H1 (cell line): ENCODE measurements at regions of chr12 and their contacts with region 1.

Region 1: GRCh38 chr12:93476555-93476954 is 9.2 kb downstream of the MRPL42 start:
- DNase-seq: no peak
- H3K4me3 ChIP-seq: no peak overlapping the region
- H3K27ac ChIP-seq: no peak overlapping the region
- H3K4me1 ChIP-seq: no peaks in the 10 kb centered on the region
- H3K27me3 ChIP-seq: no peaks in the 10 kb centered on the region
- CTCF ChIP-seq: no peak
- EP300 ChIP-seq: no peak
- POLR2A ChIP-seq: no peak
- RAD21 ChIP-seq: no peak

Region 2: GRCh38 chr12:93317227-93317626 is 159.3 kb before region 1 on chr12:
- CTCF ChIA-PET with region 1: no interaction called
- POLR2A ChIA-PET with region 1: no interaction called
- DNase-seq: no peak
- H3K4me3 ChIP-seq: no peak overlapping the region
- H3K27ac ChIP-seq: no peak overlapping the region
- H3K4me1 ChIP-seq: no peaks in the 10 kb centered on the region
- H3K27me3 ChIP-seq: no peaks in the 10 kb centered on the region
- CTCF ChIP-seq: no peak
- EP300 ChIP-seq: no peak
- POLR2A ChIP-seq: no peak
- RAD21 ChIP-seq: no peak

Region 3: DNA sequence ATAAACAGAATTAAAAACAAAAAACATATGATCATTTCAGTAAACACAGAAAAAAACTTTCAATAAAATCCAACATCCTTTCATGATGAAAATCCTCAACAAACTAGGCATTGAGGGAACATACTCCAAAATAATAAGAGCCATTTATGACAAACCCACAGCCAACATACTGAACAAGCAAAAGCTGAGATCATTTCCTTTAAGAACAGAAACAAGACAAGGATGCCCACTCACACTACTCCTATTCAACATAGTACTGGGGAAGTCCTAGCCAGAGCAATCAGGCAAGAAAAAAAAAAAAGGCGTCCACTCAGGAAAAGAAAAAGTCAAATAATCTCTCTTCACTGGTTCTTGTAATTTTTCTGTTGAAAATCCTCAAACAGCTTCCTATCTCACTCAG is 20.9 kb after region 1 on chr12:
- CTCF ChIA-PET with region 1: interaction called, 10 read pairs
- POLR2A ChIA-PET with region 1: interaction called, 17 read pairs
- DNase-seq: no peak
- H3K4me3 ChIP-seq: no peak overlapping the region
- H3K27ac ChIP-seq: no peak overlapping the region
- H3K4me1 ChIP-seq: no peaks in the 10 kb centered on the region
- H3K27me3 ChIP-seq: no peaks in the 10 kb centered on the region
- CTCF ChIP-seq: no peak
- EP300 ChIP-seq: no peak
- POLR2A ChIP-seq: no peak
- RAD21 ChIP-seq: no peak

Region 4: DNA sequence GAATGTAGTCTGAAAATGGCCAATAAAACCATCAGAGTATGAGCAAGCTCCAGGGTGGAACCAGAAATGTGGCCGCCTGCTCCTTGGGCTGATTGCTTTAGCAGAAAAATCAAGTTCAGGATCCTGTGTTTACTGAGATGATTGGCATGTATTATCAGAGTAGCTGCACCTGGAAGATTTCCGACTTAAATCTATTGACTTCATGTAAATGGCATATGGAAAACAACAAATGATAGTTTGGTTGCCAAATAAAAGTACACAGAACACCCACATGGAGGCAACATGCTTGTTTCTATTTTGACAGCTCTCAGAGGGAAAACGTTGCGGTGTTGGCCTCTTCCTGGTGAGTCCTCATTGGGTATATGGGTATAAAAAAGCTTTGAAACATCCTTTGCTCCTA is 127.2 kb after region 1 on chr12:
- CTCF ChIA-PET with region 1: no interaction called
- POLR2A ChIA-PET with region 1: no interaction called
- DNase-seq: no peak
- H3K4me3 ChIP-seq: no peak overlapping the region
- H3K27ac ChIP-seq: no peak overlapping the region
- H3K4me1 ChIP-seq: no peaks in the 10 kb centered on the region
- H3K27me3 ChIP-seq: no peaks in the 10 kb centered on the region
- CTCF ChIP-seq: no peak
- EP300 ChIP-seq: no peak
- POLR2A ChIP-seq: no peak
- RAD21 ChIP-seq: 0 out of 4 replicates have a peak, but pooled peaks of 1 of the 2 experiments have one; percentile 5